Endothelial cell of umbilical vein (primary cell): ENCODE measurements at regions of chr2 and their contacts with region 1.

Region 1: GRCh38 chr2:45935791-45936622 is 284.5 kb downstream of the PRKCE start:
- DNase-seq: peak; percentile 90
- H3K4me3 ChIP-seq: no peak overlapping the region
- H3K27ac ChIP-seq: peak overlapping the region; percentile 51
- H3K4me1 ChIP-seq: peaks cover 20% of the 10 kb centered on the region
- H3K27me3 ChIP-seq: no peaks in the 10 kb centered on the region
- CTCF ChIP-seq: peak; percentile 73 to 76
- POLR2A ChIP-seq: no peak

Region 2: GRCh38 chr2:45024600-45025291 is 911.3 kb before region 1 on chr2:
- CTCF ChIA-PET with region 1: no interaction called
- POLR2A ChIA-PET with region 1: no interaction called
- dilution Hi-C with region 1: no loop called
- intact Hi-C with region 1: loop called (anchors 2 kb)
- DNase-seq: peak; percentile 74
- H3K4me3 ChIP-seq: no peak overlapping the region
- H3K27ac ChIP-seq: peak overlapping the region; percentile 8
- H3K4me1 ChIP-seq: no peaks in the 10 kb centered on the region
- H3K27me3 ChIP-seq: peaks cover 2 to 6% of the 10 kb centered on the region in 2 experiments
- CTCF ChIP-seq: peak; percentile 4 to 28
- POLR2A ChIP-seq: no peak

Region 3: DNA sequence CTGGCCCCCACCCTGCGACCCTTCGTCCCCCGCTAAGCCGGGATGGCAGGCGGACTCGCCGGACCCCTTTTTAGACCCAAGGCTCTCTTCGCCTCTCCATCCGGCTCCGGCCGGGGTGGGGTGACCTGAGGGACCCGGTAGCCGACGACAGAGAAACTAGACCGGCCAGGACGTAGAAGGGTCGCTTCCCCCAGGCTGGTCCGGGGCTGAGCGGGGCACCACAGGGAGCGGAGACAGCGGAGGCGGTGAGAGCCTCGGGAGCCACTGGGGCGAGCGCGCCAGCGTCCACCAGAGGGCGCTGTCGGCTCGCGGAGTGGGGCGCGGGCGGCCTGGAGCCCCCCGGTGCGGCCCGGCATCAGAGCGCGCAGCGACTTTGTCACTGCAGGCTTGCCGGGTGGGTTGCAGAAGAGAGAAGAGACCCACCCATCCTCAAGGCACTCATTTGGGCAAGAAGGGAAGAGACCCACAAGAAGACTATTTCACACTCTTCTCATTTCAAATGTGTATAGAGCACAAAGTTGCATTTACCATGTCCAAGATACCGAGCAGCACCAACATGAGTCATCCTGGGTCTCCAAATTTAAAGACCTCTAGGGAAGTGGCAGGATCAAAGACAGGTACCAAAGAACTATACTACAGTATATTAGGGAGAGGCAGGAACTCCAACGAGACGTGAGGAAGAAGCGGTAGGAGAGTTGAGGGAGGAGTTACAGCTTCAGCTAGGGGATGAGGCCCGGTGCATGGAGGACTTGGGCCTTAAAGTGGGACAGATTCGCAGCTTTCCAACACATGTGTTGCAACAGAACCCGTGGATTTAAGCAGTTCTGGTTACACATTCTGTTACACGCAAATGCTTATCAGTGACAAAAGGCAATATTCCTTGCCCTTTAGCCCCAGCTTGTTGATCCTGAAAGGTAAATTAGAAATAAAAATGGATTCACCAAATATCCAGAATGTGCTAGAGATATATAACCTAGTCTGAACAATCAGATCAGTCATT is 292.2 kb before region 1 on chr2:
- CTCF ChIA-PET with region 1: interaction called, 21 read pairs
- POLR2A ChIA-PET with region 1: no interaction called
- dilution Hi-C with region 1: no loop called
- intact Hi-C with region 1: loop called (anchors 1 kb)
- DNase-seq: peak; percentile 51
- H3K4me3 ChIP-seq: peak overlapping the region; percentile 52 to 63 (median 59)
- H3K27ac ChIP-seq: peak overlapping the region; percentile 13
- H3K4me1 ChIP-seq: peaks cover 3% of the 10 kb centered on the region
- H3K27me3 ChIP-seq: no peaks in the 10 kb centered on the region
- CTCF ChIP-seq: peak; percentile 87 to 95
- POLR2A ChIP-seq: no peak

Region 4: DNA sequence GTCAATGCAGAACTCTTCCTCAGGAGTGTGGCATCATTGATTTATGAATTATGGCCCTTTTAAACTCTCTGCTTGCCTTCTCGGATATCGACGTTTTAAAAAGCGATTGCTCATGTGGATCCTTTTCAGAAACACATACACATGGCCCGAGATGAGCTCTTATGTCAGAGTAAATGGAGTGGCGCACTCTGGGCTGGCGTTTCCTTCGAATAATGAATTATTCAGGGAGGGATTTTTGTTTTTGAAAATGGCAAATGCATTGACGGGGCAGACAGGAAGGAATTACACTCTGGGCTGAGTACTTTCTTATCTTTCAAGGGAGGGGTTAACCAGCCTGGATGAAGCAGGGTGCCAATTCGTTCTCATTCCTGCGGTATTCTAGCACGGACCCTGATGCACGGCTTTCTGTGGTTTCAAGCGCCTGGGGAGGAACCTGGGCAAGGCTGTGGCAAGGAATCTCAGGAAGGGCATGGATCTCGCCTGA is 141.8 kb before region 1 on chr2:
- CTCF ChIA-PET with region 1: interaction called, 6 read pairs
- POLR2A ChIA-PET with region 1: no interaction called
- dilution Hi-C with region 1: no loop called
- intact Hi-C with region 1: loop called (anchors 1 kb)
- DNase-seq: peak; percentile 61
- H3K4me3 ChIP-seq: peak overlapping the region in 1 of 3 experiments; percentile 20
- H3K27ac ChIP-seq: peak overlapping the region; percentile 41
- H3K4me1 ChIP-seq: peaks cover 43% of the 10 kb centered on the region
- H3K27me3 ChIP-seq: no peaks in the 10 kb centered on the region
- CTCF ChIP-seq: no peak
- POLR2A ChIP-seq: no peak

Region 5: DNA sequence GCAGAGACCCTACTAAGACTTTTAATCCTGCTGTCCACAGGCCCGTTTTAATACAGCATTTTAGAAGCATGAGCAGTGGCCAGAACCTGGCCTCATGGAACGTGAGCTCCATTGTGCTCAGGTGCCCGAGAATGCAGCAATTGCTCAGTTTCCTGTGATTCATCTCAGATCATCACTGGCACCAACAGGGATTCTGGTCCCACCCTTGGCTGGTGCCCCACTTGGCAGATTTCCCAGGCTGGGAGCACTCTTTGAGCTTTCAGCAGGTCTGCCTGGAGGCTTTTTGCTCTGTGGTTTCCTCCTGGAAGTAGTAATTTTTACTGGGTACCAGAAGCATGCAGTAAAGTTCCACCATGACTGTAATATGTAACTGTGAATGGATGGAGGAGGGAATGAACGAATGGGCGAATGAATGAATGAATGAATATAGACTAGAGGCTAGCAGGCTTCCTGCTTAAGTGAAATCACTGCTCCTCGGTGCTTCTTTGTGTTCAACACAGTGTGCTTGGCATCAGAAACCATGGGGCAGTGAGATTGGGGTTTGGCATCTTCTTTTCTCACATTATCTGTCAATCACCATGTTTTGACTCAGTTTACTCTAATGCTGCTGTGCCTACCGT is 28.3 kb after region 1 on chr2:
- CTCF ChIA-PET with region 1: interaction called, 14 read pairs
- POLR2A ChIA-PET with region 1: no interaction called
- dilution Hi-C with region 1: no loop called
- intact Hi-C with region 1: loop called (anchors 1 kb)
- DNase-seq: peak; percentile 95
- H3K4me3 ChIP-seq: peak overlapping the region in 1 of 3 experiments; percentile 3
- H3K27ac ChIP-seq: peak overlapping the region; percentile 80
- H3K4me1 ChIP-seq: peaks cover 37% of the 10 kb centered on the region
- H3K27me3 ChIP-seq: no peaks in the 10 kb centered on the region
- CTCF ChIP-seq: no peak
- POLR2A ChIP-seq: no peak